GM10248 (cell line): ENCODE measurements at regions of chr11 and their contacts with region 1.

Region 1: GRCh38 chr11:123407130-123407995 is 22.7 kb upstream of the GRAMD1B start:
- DNase-seq: peak; percentile 44
- CTCF ChIP-seq: peak; percentile 68

Region 2: GRCh38 chr11:123268118-123268517 is 139.2 kb before region 1 on chr11:
- CTCF ChIA-PET with region 1: no interaction called
- POLR2A ChIA-PET with region 1: no interaction called
- DNase-seq: no peak
- CTCF ChIP-seq: no peak

Region 3: DNA sequence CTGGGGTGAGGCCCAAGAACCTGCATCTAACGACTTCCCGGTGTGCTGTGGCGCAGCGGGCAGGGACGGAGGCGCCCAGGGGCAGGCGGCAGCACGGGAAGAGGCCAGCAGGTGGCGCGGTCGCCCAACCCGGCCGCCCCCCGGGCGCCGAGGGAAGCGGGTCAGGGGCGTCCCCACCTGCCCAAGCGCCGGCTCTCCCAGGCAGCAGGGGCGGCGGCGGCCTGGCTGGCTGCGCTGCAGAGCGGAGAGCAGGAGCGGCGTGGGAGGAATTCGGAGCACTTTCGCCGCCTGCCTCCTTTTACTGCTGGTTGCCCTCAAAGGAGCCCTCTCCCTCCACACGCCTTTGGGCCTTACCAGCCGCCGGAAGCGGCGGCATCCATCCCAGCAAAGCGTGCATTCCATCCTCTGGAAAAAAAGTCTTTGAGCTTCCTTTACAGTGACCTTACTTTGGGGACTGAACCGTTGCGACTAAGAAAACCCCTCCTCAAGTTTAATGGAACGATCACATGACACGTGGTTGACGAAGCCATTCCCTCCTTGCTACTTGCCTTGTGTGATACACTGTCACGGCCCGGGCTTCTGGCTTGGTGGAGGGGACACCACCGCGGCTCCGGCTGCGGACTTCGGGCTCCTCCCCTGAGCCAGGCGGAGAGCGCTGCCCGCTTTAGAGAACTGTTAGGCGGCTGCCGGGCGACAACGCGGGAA is 105.5 kb before region 1 on chr11:
- CTCF ChIA-PET with region 1: interaction called, 19 read pairs
- POLR2A ChIA-PET with region 1: no interaction called
- DNase-seq: peak; percentile 89
- CTCF ChIP-seq: peak; percentile 90

Region 4: DNA sequence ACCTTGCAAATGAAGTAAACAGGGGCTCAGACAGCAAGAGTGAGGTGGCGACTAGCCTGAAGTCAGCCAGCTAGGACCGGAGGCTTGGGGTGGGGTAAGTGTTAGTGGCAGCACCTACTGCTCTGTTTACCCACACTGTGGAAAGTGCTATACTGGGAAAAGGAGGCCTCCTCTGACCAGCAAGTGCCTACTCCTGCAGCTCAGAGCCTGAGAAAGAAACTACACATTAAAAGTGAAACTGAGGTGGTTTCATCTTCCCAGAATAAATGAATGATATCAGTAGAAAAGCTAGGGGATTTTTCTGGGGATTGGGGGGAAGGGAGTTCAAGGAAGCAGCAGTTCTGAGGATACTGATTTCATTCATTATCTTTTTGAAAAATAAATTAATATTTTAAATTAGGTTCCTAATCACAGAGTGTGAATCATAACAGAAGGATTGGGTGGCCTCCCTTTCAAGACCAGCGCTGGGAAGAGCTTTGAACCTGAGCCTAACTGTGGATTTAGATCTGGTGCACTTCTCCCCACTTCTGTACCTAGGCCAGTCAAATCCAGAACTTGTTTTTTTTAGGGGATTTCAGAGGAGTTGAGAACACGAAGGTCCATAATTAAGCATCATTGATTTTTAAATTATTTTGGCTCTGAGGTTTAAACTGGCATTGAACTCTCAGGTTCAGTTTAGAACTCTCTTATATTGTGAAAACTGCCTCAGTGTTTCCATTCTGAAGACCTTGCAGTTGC is 25.4 kb before region 1 on chr11:
- CTCF ChIA-PET with region 1: interaction called, 42 read pairs
- POLR2A ChIA-PET with region 1: no interaction called
- DNase-seq: peak; percentile 38
- CTCF ChIP-seq: no peak

Region 5: GRCh38 chr11:123421589-123421988 is 14.2 kb after region 1 on chr11:
- CTCF ChIA-PET with region 1: interaction called, 49 read pairs
- POLR2A ChIA-PET with region 1: no interaction called
- DNase-seq: no peak
- CTCF ChIP-seq: no peak

Region 6: DNA sequence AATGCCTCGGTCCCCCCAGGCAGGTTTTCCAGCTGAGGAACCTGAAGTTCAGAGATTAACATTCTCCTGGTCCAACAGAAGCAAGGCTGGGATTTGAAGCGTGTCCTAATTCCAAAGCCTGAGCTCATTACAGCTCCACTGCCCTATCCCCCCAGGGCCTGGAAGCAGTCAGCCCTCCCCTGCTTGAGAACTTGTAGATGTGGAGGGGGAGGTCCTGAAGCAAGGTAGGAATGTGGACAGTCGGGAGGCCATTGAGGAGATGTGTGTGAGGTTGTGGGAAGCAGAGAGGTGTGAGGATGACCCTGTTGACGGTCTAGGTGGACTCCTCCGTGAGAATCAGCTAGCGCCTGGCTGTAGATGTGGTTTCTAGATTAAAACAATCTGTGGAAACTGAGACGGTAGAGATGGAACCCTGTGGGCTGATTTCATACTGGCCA is 30.8 kb after region 1 on chr11:
- CTCF ChIA-PET with region 1: interaction called, 51 read pairs
- POLR2A ChIA-PET with region 1: no interaction called
- DNase-seq: no peak
- CTCF ChIP-seq: no peak

Region 7: GRCh38 chr11:123478352-123478987 is 71.1 kb after region 1 on chr11:
- CTCF ChIA-PET with region 1: interaction called, 131 read pairs
- POLR2A ChIA-PET with region 1: no interaction called
- DNase-seq: peak; percentile 53
- CTCF ChIP-seq: peak; percentile 42